GM12878 (cell line): ENCODE measurements at regions of chr1 and their contacts with region 1.

Region 1: DNA sequence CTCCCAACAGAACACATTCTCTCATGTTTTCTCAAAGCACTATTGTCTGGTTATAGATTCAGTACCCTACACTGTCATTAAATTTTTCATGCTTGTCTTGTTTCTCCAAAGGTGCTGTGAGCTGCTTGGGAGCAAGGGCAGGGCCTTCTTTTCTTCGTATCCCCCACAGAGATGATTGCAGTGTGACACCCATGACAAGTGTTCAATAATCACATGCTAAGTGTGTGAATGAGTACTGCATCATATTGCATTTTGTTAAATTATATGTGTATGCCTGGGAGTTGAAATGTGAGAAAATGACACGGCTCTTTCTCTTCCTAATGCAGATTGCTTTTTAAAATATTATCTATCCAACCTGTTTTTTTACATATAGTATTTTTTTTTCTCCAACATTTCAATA is 57.3 kb upstream of the MAGI3 start:
- DNase-seq: no peak
- ATAC-seq: no peak
- H3K4me3 ChIP-seq: no peak overlapping the region
- H3K27ac ChIP-seq: no peak overlapping the region
- H3K4me1 ChIP-seq: no peaks in the 10 kb centered on the region
- H3K27me3 ChIP-seq: peaks cover 0 to 3% of the 10 kb centered on the region in 2 experiments; a peak in 1 of 4 replicates
- CTCF ChIP-seq: no peak
- EP300 ChIP-seq: no peak
- POLR2A ChIP-seq: no peak
- RAD21 ChIP-seq: no peak

Region 2: DNA sequence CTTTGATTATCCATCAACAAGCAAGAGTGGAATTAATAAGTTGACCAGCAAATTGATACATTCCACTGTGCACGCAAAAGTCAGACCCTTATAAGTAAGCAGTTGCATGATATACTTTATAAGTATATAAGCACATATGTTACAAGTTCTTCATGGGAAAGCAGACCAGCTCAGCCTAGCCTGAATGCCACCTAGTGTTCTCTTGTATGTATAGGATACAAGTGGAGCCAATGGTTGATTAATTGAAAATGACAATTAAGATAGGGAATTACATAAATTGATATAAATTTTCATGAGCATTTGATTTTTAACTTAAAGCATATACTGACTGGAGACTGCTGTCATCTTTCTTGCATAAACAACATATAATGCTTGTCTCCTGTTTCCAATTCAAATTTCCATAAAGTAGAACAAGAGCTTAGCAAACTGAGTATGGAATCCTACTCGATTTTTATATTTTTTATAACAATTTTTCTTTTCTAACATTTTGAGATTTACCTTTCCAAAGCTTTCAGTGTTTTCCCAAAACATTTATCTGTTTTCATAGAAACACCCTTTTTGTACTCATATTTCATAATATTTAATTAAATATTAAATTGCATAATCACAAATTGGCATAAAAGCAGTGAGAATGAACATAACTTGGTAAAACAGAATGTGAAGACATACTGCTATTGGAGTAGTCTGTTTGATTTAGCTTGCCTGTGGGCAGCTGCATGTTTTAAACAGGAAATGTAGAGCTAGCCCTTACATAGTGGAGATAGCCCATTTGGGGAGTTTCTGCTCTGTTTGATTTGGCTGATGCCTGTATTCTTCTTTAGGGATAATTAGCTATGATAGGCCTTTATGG is 120.1 kb after region 1 on chr1:
- CTCF ChIA-PET with region 1: no interaction called
- POLR2A ChIA-PET with region 1: no interaction called
- RAD21 ChIA-PET with region 1: no interaction called
- SMC1A ChIA-PET with region 1: no interaction called
- in situ Hi-C with region 1: no loop called
- intact Hi-C with region 1: loop called (anchors 10 kb)
- DNase-seq: no peak
- ATAC-seq: peak; percentile 67; the same call in 2 of the 3 replicates
- H3K4me3 ChIP-seq: no peak overlapping the region
- H3K27ac ChIP-seq: no peak overlapping the region
- H3K4me1 ChIP-seq: no peaks in the 10 kb centered on the region
- H3K27me3 ChIP-seq: no peaks in the 10 kb centered on the region; a peak in 1 of 4 replicates
- CTCF ChIP-seq: peak; percentile 37 to 46 (median 38); a peak in 4 of 6 replicates
- EP300 ChIP-seq: no peak
- POLR2A ChIP-seq: no peak
- RAD21 ChIP-seq: peak; percentile 59